Right cardiac atrium (tissue), 5 donors: ENCODE measurements at regions of chr21 and their contacts with region 1.

Region 1: DNA sequence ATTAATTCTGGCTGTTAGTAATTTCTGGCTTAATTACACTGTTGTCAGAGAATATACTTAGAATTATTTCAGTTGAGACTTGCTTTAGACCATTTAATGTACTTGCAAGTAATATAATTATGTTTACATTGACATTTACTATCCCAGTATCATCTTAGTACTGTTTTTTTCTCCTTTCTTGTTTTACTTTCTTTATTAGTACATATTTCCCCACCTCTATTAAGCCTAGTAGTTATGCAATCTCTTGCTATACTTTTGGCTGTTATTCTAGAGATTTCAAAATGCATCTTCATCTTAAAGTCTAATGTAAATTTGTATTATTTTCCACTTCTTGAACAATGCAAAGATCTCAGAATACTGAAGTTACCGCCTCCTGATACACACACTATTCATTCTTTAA is 24.4 kb downstream of the BRWD1 start:
- DNase-seq: no peak
- ATAC-seq: no peak
- H3K4me3 ChIP-seq: no peak overlapping the region
- H3K27ac ChIP-seq: no peak overlapping the region
- H3K4me1 ChIP-seq: no peaks in the 10 kb centered on the region
- H3K27me3 ChIP-seq: no peaks in the 10 kb centered on the region

Region 2: GRCh38 chr21:39445321-39446269 is 156.6 kb after region 1 on chr21 and contains the start of gene LCA5L:
- intact Hi-C with region 1: loop called in 1 of 4 experiments (anchors 10 kb)
- DNase-seq: peak; percentile 93 to 98 (median 97)
- ATAC-seq: peak; percentile 95
- H3K4me3 ChIP-seq: peak within 1 kb of the TSS; percentile 55
- H3K27ac ChIP-seq: peak within 1 kb of the TSS; percentile 88
- H3K4me1 ChIP-seq: peaks cover 3% of the 10 kb centered on the region
- H3K27me3 ChIP-seq: no peaks in the 10 kb centered on the region
- total RNA-seq, gene LCA5L: 0.59 to 1.3 (median 1.2) TPM

Region 3: DNA sequence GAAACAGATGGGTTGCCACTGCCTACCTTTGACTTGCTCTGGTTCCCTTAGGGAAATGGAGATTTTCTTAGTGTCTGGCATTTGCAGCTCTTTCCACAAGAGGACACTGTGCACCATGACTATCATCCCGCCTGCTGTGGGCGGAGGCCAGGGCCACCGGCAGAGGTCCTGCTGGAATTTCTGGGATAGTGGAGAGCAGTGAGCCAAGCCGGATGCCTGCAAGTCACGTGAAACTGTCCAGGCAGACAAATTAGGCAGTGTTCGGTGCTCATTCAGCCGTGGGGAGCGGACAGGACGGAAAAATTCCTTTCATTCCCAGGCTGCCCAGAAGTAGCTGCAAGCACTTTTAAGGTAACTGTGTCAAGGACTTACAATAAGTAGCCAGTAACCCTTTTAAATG is 499.4 kb after region 1 on chr21:
- intact Hi-C with region 1: no loop called
- DNase-seq: peak; percentile 80 to 89 (median 88)
- ATAC-seq: peak; percentile 99 to 100
- H3K4me3 ChIP-seq: peak overlapping the region; percentile 43
- H3K27ac ChIP-seq: no peak overlapping the region
- H3K4me1 ChIP-seq: no peaks in the 10 kb centered on the region
- H3K27me3 ChIP-seq: no peaks in the 10 kb centered on the region